Gastrocnemius medialis (tissue), 4 donors: ENCODE measurements at regions of chr20 and their contacts with region 1.

Region 1: DNA sequence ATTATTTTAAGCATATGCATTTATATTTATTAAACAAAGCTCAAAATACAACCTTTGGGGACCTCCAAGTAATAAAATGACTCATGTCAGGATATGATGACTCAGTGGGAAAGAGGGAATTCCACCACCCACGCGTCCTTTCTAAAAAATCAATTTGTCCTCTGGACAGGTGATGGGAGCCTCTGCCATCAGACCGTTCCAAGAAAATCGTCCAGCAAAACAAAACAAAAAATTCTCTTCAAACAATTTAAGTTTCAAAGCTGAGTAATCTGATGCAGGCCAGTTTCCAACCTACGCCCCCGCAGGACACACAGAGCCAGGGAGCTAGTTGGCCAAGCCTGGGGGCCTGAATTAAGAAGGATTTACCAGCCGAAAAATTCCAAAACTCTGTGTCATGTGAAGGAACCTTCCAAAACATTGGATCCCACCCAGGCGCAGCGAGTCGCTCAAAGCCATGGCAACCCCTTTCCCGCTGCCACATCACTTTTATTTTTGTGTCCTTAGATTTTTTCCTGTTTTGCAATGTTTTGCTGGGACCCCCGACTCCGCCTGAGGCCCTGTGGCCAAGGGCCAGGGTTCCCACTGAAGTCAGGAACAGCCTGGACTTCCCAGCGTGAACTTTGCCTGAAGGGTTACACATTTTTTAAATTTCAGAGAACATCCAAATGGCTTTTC is 95.3 kb downstream of the NFATC2 start:
- DNase-seq: peak; percentile 31 to 66
- ATAC-seq: peak; percentile 6 to 27
- H3K4me3 ChIP-seq: no peak overlapping the region
- H3K27ac ChIP-seq: peak overlapping the region; percentile 48 to 87 (median 78)
- H3K4me1 ChIP-seq: peaks cover 37 to 38% of the 10 kb centered on the region in 2 donors
- H3K27me3 ChIP-seq: no peaks in the 10 kb centered on the region
- CTCF ChIP-seq: no peak
- POLR2A ChIP-seq: no peak

Region 2: GRCh38 chr20:51412333-51412871 is 34.8 kb before region 1 on chr20:
- in situ Hi-C with region 1: no loop called
- intact Hi-C with region 1: loop called (anchors 5 kb)
- DNase-seq: peak in 1 of 2 donors; percentile 26
- ATAC-seq: peak; percentile 22 to 34
- H3K4me3 ChIP-seq: peak overlapping the region; percentile 3 to 28 (median 18)
- H3K27ac ChIP-seq: peak overlapping the region; percentile 46 to 77 (median 58)
- H3K4me1 ChIP-seq: peaks cover 18 to 19% of the 10 kb centered on the region in 2 donors
- H3K27me3 ChIP-seq: no peaks in the 10 kb centered on the region
- CTCF ChIP-seq: no peak
- POLR2A ChIP-seq: no peak

Region 3: DNA sequence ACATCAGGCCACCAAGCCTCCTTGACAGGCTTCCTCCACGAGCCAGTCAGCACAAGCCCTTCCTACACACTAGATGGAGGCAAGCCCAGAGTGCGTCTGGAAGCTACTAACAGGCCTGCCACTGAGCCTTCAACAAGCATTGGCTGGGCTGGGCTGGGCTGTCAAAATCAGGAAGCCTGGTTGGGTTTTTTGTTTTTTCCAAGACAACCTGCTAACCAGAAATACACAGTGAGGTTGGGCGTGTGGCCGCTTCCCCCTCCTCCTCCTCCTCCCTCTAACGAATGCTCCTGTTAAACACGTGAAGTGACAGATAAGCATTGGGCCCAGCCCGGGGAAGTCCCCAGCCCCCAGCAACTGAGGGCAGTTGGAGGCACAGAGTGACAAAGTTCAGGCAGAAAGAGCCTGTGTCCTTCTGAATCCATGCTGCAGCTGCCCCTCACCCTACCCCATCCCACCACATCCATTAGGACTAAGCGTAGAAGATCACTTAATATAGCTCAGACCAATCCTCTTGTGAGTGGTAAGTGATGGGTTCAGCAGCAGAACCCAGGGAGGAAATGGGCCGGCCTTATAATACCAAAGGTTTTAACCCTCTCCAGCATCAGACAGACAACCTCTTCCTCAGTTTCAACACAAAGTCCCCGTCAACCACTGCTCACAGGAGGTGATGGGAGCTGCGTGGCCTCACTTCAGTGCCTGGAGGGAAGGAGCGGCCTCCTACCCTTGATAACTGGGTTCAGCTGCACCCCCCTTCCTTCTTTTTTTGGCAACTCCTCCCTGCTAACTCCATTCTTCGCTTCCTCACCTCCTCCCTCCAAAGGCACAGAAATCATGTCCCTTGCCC is 94.2 kb after region 1 on chr20:
- in situ Hi-C with region 1: no loop called
- intact Hi-C with region 1: loop called (anchors 2 kb)
- DNase-seq: peak; percentile 42 to 64
- ATAC-seq: peak; percentile 24 to 35
- H3K4me3 ChIP-seq: peak overlapping the region; percentile 35 to 62 (median 53)
- H3K27ac ChIP-seq: peak overlapping the region; percentile 75 to 93 (median 82)
- H3K4me1 ChIP-seq: peaks cover 31 to 35% of the 10 kb centered on the region in 2 donors
- H3K27me3 ChIP-seq: no peaks in the 10 kb centered on the region
- CTCF ChIP-seq: no peak
- POLR2A ChIP-seq: no peak

Region 4: DNA sequence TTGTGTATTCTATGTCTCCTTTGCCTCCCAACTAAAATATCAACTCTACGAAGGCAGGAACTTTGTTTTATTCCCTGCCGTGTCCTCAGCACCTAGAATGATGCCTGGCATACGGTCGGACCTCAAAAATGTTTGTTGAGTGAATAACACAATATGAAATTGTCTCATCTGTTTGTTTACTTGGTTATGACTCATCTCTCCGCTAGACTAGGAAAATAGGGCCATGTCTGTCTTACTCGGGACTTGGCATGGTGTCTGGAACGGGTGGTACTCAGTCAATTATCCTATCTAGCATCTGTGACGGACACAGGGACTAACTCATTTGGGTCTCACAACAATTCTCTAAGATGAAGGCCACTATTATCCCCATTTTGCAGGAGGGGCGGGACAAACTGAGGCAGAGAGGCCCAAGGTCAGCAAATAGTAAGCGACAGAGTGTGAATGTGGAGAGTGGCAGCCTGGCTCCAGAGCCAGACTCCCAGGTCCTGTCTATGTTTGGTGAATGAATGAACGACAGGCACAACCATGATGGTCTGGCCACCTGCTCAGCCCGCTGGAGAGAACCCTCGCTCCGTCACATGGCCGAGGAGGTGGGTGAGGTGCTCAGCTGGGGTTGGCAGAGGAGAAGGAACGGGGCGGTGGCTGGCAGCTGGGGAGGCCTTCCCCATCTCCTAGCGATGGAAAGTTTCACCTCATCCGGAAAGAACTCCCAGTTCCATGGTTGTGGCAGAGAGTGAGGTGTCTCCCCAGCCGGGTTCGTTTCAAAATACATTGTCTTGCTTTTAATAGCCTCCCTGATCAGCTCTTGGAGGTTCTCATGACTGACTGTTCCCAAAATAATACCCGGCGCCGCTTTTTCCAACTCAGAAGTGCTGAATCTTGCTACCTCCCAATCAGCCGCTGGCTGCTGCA is 122.8 kb after region 1 on chr20:
- in situ Hi-C with region 1: loop called in 1 of 4 experiments (anchors 10 kb)
- intact Hi-C with region 1: loop called (anchors 5 kb)
- DNase-seq: peak; percentile 71 to 89
- ATAC-seq: peak; percentile 88 to 93
- H3K4me3 ChIP-seq: peak overlapping the region; percentile 33 to 45 (median 40)
- H3K27ac ChIP-seq: peak overlapping the region; percentile 75 to 89 (median 88)
- H3K4me1 ChIP-seq: peaks cover 29 to 45% of the 10 kb centered on the region in 2 donors
- H3K27me3 ChIP-seq: no peaks in the 10 kb centered on the region
- CTCF ChIP-seq: no peak
- POLR2A ChIP-seq: peak; percentile 26 to 29